ENCODE measurements at regions of chr11 and their contacts with region 1.

Region 1: DNA sequence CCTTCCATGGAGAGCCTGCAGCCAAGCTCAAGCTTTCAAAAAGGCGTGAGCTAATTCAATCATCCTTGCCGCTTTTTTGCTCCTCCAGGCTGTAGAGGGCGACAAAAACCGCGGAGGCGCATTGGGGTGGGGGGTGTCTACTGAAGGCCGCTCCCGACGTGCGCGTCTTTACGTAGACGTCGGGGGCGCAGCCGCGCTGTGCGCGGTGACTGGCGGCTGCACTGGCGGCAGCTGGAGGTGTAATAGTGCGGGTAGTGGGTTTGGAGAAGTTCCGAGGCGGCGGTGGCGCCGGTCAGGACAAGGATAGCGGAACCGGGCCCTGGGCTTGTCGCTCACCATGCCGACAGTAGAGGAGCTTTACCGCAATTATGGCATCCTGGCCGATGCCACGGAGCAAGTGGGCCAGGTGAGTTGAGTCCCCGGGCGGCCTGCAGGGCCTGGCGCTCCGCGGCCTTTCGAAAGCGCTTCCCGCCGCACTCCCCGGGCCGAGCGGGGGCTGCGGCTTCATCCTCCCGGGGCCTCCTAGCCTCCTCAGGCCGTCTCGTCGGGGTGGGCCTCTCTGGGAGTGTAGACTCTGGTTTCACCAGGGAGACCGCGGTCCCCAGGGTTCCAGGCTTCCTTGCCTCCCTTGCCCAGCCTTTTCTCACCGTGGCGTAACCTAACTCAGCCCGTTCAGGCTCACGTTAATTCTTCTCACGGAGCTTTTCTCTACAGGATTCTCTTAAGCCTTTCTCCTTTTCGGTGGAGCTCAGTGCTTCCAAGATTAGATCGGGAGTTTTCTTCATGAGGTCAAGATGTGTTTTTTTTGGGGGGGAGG is at the start of gene API5:
- DNase-seq: peak; percentile 90 to 95 (median 91)
- H3K4me3 ChIP-seq: peak within 1 kb of the TSS; percentile 80 to 98
- H3K4me3 Mint-ChIP-seq: peak within 1 kb of the TSS; percentile 92 to 99 (median 97)
- H3K27ac ChIP-seq: peak within 1 kb of the TSS; percentile 85
- H3K27ac Mint-ChIP-seq: peak within 1 kb of the TSS; percentile 89 to 99 (median 97)
- H3K4me1 ChIP-seq: peaks cover 44% of the 10 kb centered on the region
- H3K4me1 Mint-ChIP-seq: peaks cover 35 to 55% (median 46%) of the 10 kb centered on the region in 4 donors
- H3K27me3 ChIP-seq: no peaks in the 10 kb centered on the region
- H3K27me3 Mint-ChIP-seq: no peaks in the 10 kb centered on the region
- total RNA-seq, gene API5: 93.7 to 101 TPM

Region 2: DNA sequence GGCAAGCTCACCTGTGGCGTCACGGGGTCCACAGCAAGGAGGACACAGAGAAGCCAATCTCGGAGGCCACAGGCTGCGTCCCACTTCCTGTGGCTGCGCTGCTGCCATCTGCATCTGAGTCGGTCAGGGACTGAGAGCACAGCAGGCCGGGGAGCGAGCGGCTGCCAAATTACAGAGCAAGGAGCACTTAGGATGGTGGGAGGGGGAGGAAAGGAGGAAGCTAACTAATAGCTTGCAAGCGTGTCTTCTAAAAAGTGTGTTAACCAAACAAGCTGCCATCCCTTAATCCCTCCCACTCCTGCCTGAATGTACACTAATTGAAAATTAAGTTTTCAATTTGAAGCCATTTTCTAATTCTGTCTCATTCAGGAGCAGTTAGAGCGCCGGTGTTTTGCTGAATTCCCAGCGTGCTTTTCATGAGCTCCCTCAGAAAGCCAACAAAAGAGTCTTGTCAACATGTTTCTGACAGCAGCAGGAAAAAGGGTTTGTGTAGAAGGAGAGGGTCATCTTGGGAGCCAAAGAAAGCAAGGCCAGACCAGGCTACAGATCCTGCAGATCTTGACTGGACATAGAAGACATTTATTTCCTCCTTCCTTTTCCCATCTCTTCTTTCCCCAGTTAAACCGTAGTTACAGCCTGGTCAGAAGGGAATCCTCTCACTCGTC is 42.6 kb before region 1 on chr11:
- CTCF ChIA-PET with region 1: no interaction called
- POLR2A ChIA-PET with region 1: no interaction called
- intact Hi-C with region 1: no loop called
- DNase-seq: no peak
- H3K4me3 ChIP-seq: no peak overlapping the region
- H3K4me3 Mint-ChIP-seq: no peak overlapping the region
- H3K27ac ChIP-seq: no peak overlapping the region
- H3K27ac Mint-ChIP-seq: peak overlapping the region in 1 of 7 donors; percentile 62
- H3K4me1 ChIP-seq: no peaks in the 10 kb centered on the region
- H3K4me1 Mint-ChIP-seq: peaks cover 0 to 13% (median 1%) of the 10 kb centered on the region in 4 donors
- H3K27me3 ChIP-seq: no peaks in the 10 kb centered on the region
- H3K27me3 Mint-ChIP-seq: peaks cover 4 to 16% of the 10 kb centered on the region in 2 donors

Region 3: GRCh38 chr11:43298397-43298796 is 13.6 kb before region 1 on chr11:
- CTCF ChIA-PET with region 1: interaction called, 10 read pairs
- POLR2A ChIA-PET with region 1: no interaction called
- intact Hi-C with region 1: no loop called
- DNase-seq: no peak
- H3K4me3 ChIP-seq: no peak overlapping the region
- H3K4me3 Mint-ChIP-seq: no peak overlapping the region
- H3K27ac ChIP-seq: no peak overlapping the region
- H3K27ac Mint-ChIP-seq: no peak overlapping the region
- H3K4me1 ChIP-seq: no peaks in the 10 kb centered on the region
- H3K4me1 Mint-ChIP-seq: no peaks in the 10 kb centered on the region
- H3K27me3 ChIP-seq: no peaks in the 10 kb centered on the region
- H3K27me3 Mint-ChIP-seq: peaks cover 2 to 7% of the 10 kb centered on the region in 2 donors

Region 4: DNA sequence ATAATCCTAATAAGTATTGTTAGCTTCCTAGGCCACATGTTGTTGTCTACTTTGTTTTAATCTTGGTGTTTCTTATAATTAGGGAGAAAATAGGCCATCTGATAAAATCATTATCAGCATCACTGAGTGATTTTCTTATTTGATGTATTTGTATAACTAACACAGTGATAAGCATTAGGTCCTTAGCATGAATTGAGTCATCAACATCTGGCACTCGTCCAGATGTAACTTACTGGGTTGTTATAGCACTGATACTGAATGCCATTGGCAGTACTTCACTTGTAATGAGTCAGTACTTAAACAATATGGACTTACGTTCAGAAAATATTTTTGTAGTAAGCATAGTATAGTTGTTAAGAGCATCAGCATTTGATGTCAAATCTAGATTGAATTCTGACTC is 16.0 kb after region 1 on chr11:
- CTCF ChIA-PET with region 1: interaction called, 24 read pairs
- POLR2A ChIA-PET with region 1: no interaction called
- intact Hi-C with region 1: no loop called
- DNase-seq: no peak
- H3K4me3 ChIP-seq: no peak overlapping the region
- H3K4me3 Mint-ChIP-seq: no peak overlapping the region
- H3K27ac ChIP-seq: no peak overlapping the region
- H3K27ac Mint-ChIP-seq: no peak overlapping the region
- H3K4me1 ChIP-seq: no peaks in the 10 kb centered on the region
- H3K4me1 Mint-ChIP-seq: peaks cover 0 to 2% (median 0%) of the 10 kb centered on the region in 4 donors
- H3K27me3 ChIP-seq: no peaks in the 10 kb centered on the region
- H3K27me3 Mint-ChIP-seq: no peaks in the 10 kb centered on the region

Region 5: DNA sequence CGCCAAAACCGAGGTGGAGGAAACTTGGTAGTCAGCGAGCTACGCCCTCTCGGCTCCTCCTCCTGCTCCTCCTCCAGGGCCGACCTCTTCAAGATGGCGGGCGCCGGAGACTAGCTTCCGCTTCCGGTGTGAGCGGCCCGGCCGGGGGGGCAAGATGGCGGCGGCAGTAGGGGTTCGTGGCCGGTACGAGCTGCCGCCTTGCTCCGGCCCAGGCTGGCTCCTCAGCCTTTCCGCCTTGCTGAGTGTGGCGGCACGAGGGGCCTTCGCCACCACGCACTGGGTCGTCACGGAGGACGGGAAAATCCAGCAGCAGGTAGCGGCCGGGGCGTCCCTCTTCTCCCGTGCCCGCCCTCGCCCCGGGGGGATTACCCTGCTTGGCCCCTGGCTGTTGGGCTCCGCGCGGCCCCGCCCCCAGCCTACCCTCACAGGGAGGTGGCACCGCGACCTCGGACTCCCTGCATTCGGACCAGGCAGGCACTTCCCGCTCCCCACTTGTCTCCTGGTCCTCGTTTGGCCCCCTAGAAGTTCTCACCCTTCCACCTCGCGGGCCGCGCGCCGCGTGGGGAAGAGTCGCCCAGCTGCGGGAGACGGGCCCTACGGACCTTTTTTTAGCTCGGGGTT is 46.9 kb after region 1 on chr11 and contains the start of gene TTC17:
- CTCF ChIA-PET with region 1: interaction called, 59 read pairs
- POLR2A ChIA-PET with region 1: interaction called, 61 read pairs
- intact Hi-C with region 1: loop called (anchors 1 kb)
- DNase-seq: peak; percentile 89 to 95 (median 90)
- H3K4me3 ChIP-seq: peak within 1 kb of the TSS; percentile 51 to 89
- H3K4me3 Mint-ChIP-seq: peak within 1 kb of the TSS; percentile 94 to 100 (median 99)
- H3K27ac ChIP-seq: peak within 1 kb of the TSS; percentile 92
- H3K27ac Mint-ChIP-seq: peak within 1 kb of the TSS; percentile 96 to 99 (median 98)
- H3K4me1 ChIP-seq: peaks cover 32% of the 10 kb centered on the region
- H3K4me1 Mint-ChIP-seq: peaks cover 31 to 60% (median 47%) of the 10 kb centered on the region in 4 donors
- H3K27me3 ChIP-seq: no peaks in the 10 kb centered on the region
- H3K27me3 Mint-ChIP-seq: no peaks in the 10 kb centered on the region
- total RNA-seq, gene TTC17: 105 to 112 TPM

Region 6: GRCh38 chr11:43643898-43644620 is 332.1 kb after region 1 on chr11:
- CTCF ChIA-PET with region 1: no interaction called
- POLR2A ChIA-PET with region 1: no interaction called
- intact Hi-C with region 1: loop called (anchors 1 kb)
- DNase-seq: peak; percentile 84 to 87 (median 85)
- H3K4me3 ChIP-seq: peak overlapping the region; percentile 75 to 90
- H3K4me3 Mint-ChIP-seq: peak overlapping the region; percentile 88 to 97 (median 94)
- H3K27ac ChIP-seq: peak overlapping the region; percentile 71
- H3K27ac Mint-ChIP-seq: peak overlapping the region; percentile 82 to 95 (median 93)
- H3K4me1 ChIP-seq: peaks cover 17% of the 10 kb centered on the region
- H3K4me1 Mint-ChIP-seq: peaks cover 12 to 17% (median 15%) of the 10 kb centered on the region in 4 donors
- H3K27me3 ChIP-seq: peaks cover 9% of the 10 kb centered on the region
- H3K27me3 Mint-ChIP-seq: peaks cover 12 to 18% of the 10 kb centered on the region in 2 donors

Region 7: DNA sequence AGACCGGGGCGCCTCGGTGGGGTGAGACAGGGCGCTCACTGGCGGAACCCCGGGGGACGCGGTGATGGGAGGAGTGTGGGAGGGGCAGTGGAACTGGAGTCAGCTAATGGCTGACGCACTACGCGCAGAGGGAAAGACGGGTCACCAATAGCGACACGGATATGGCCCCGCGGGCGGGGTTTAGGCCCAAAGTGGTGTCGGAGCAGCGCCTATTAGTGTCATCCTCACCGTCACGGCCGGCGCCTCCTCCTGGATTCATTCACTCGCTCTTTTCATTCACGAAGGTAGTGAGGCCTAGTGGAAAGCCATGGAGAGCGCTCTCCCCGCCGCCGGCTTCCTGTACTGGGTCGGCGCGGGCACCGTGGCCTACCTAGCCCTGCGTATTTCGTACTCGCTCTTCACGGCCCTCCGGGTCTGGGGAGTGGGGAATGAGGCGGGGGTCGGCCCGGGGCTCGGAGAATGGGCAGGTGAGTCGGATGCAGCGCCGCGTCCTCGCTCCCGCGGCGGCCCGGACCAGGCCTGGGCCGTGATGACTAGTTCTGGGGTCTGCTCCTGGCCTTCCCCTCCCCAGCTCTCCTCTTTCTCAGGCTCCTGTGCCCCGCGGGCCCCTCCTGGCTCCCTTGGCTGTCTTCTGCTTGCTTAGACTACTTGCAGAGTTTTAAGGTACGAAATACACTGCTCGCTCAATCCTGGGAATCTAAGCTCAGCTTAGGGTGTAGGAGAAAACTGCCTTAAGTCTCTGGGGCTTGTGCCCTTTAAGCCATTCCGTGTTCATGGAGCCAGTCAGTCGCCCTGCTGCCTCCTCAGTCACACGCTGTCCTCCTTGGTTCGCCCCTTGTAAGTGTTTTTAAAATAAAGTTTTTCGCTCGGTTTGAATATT is 368.8 kb after region 1 on chr11 and contains the start of gene HSD17B12:
- CTCF ChIA-PET with region 1: no interaction called
- POLR2A ChIA-PET with region 1: interaction called, 6 read pairs
- intact Hi-C with region 1: loop called (anchors 1 kb)
- DNase-seq: peak; percentile 98 to 100 (median 99)
- H3K4me3 ChIP-seq: peak within 1 kb of the TSS in 1 of 2 donors; percentile 65
- H3K4me3 Mint-ChIP-seq: peak within 1 kb of the TSS; percentile 88 to 96 (median 93)
- H3K27ac ChIP-seq: peak within 1 kb of the TSS; percentile 87
- H3K27ac Mint-ChIP-seq: peak within 1 kb of the TSS; percentile 90 to 99 (median 98)
- H3K4me1 ChIP-seq: peaks cover 12% of the 10 kb centered on the region
- H3K4me1 Mint-ChIP-seq: peaks cover 17 to 30% (median 22%) of the 10 kb centered on the region in 4 donors
- H3K27me3 ChIP-seq: no peaks in the 10 kb centered on the region
- H3K27me3 Mint-ChIP-seq: no peaks in the 10 kb centered on the region
- total RNA-seq, gene HSD17B12: 14.0 to 17.9 TPM

Region 8: DNA sequence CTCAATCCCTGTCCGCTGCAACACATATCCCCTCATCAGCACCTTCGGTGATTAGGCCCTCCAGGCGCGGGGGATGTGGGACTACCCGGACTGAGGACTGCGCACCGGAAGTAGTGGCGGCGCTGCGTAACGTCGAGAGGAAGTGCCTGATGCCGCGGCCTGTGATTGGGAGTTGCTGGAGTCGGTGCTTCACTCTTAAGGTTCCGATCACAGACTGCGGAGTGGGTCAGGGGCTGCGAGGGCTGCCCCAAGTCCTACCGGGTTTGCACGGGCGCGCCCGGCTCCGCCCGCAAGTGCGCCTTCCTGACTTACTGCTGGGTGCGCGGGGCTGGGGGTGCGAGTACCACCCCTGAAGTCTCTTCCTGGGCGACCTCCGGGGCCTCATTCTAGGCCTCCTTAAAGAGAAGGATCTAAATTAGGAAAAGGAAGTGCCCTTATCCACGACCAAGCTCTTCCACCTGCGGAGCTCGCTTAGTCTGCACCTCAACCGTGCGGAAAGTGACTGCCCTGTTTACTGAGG is 568.7 kb after region 1 on chr11 and contains the start of gene ALKBH3:
- CTCF ChIA-PET with region 1: interaction called, 5 read pairs
- POLR2A ChIA-PET with region 1: no interaction called
- intact Hi-C with region 1: loop called (anchors 2 kb)
- DNase-seq: peak; percentile 87 to 93 (median 89)
- H3K4me3 ChIP-seq: peak within 1 kb of the TSS; percentile 86 to 92
- H3K4me3 Mint-ChIP-seq: peak within 1 kb of the TSS; percentile 88 to 98 (median 96)
- H3K27ac ChIP-seq: peak within 1 kb of the TSS; percentile 64
- H3K27ac Mint-ChIP-seq: peak within 1 kb of the TSS; percentile 75 to 96 (median 92)
- H3K4me1 ChIP-seq: peaks cover 19% of the 10 kb centered on the region
- H3K4me1 Mint-ChIP-seq: peaks cover 17 to 41% (median 27%) of the 10 kb centered on the region in 4 donors
- H3K27me3 ChIP-seq: peaks cover 8% of the 10 kb centered on the region
- H3K27me3 Mint-ChIP-seq: peaks cover 13 to 25% of the 10 kb centered on the region in 2 donors
- total RNA-seq, gene ALKBH3: 34.1 to 39.6 TPM

Measured in CD4-positive, alpha-beta memory T cell (primary cell).